Endothelial cell of umbilical vein (primary cell): ENCODE measurements at regions of chr17 and their contacts with region 1.

Region 1: DNA sequence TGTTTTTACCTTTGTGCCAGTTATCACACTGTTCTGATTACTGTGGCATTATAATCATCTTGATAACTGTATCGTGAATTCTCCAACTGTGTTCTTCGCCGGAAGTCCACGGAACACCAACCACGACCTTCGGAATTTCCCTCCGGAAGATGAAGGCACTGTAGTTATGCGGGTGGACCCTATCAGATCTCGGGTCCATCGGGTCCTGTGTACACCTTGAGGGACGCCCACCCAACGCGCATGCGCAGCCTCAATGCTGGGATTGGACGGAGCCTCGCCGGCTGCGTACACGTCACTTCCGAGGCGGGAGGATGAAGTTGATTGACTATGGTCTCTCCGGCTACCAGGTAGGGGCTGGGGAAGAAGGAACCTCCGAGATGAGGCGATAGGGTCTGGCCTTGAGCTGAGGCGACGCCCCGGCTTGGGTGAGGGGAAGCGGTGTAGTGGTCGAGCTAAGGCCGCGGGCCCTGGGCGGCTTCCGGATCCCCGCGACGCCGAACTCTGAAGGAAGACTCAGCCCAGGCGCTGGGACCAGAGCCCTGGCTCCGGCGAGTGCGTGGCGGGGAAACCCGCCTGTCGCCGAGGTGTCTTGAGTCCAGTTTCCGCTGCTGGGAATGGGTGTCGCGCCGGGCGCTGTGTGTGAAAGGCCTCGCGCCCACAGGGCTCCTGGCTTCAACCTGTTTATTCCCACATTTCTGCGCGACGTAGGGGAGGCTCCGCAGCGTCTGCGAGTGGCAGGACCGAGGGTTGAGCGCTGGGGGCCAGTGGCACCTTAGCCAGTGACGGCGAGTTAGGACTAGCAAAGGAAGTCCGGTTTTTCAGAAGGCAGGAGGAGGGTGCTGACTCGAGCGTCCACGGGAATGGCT is at the start of gene DHRS7B:
- DNase-seq: peak; percentile 93
- H3K4me3 ChIP-seq: peak within 1 kb of the TSS; percentile 47 to 84 (median 67)
- H3K27ac ChIP-seq: peak within 1 kb of the TSS; percentile 73
- H3K4me1 ChIP-seq: peaks cover 20% of the 10 kb centered on the region
- H3K27me3 ChIP-seq: peaks cover 0 to 2% of the 10 kb centered on the region in 2 experiments
- CTCF ChIP-seq: no peak
- POLR2A ChIP-seq: no peak
- total RNA-seq, gene DHRS7B: 12.7 and 14.0 TPM in 2 replicates

Region 2: GRCh38 chr17:20916383-20916782 is 210.5 kb before region 1 on chr17:
- CTCF ChIA-PET with region 1: no interaction called
- POLR2A ChIA-PET with region 1: no interaction called
- dilution Hi-C with region 1: no loop called
- intact Hi-C with region 1: no loop called
- DNase-seq: no peak
- H3K4me3 ChIP-seq: no peak overlapping the region
- H3K27ac ChIP-seq: no peak overlapping the region
- H3K4me1 ChIP-seq: no peaks in the 10 kb centered on the region
- H3K27me3 ChIP-seq: no peaks in the 10 kb centered on the region
- CTCF ChIP-seq: no peak
- POLR2A ChIP-seq: no peak

Region 3: GRCh38 chr17:21186399-21187187 is 59.7 kb after region 1 on chr17:
- CTCF ChIA-PET with region 1: interaction called, 9 read pairs
- POLR2A ChIA-PET with region 1: no interaction called
- dilution Hi-C with region 1: no loop called
- intact Hi-C with region 1: loop called (anchors 2 kb)
- DNase-seq: peak; percentile 78
- H3K4me3 ChIP-seq: peak overlapping the region in 1 of 3 experiments; percentile 4
- H3K27ac ChIP-seq: peak overlapping the region; percentile 68
- H3K4me1 ChIP-seq: peaks cover 16% of the 10 kb centered on the region
- H3K27me3 ChIP-seq: no peaks in the 10 kb centered on the region
- CTCF ChIP-seq: no peak
- POLR2A ChIP-seq: peak; percentile 14

Region 4: DNA sequence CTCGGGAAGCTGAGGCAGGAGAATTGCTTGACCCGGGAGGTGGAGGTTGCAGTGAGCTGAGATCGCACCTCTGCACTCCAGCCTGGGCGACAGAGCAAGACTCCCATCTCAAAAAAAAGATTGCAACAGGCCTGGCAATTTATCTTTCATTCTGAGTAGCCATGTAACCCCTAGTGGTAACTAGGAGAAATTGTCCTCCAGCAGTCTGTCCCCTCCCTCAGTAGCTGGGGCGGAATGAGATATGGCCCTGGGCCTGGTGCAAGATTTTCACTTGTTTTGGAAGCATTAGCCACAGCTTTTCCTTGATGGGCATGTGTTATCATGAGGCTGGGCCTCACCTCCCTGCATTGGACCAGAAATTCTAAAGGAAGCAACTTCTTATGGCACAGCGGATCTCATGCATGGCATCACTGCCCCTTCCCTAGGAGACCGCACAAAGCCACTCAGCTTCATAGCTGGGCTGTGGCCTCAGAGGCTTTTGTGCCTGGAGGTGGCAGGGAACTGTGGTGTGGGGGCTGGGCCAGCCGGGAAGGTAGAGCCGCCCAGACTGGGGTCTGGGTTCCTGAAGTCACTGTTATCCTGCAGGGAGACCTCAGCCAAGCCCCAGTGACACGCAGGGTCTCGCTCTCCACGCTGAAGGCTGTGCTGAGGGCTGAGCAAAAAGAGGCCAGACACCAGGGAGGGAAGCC is 112.9 kb after region 1 on chr17:
- CTCF ChIA-PET with region 1: interaction called, 20 read pairs
- POLR2A ChIA-PET with region 1: no interaction called
- dilution Hi-C with region 1: no loop called
- intact Hi-C with region 1: loop called (anchors 1 kb)
- DNase-seq: no peak
- H3K4me3 ChIP-seq: no peak overlapping the region
- H3K27ac ChIP-seq: no peak overlapping the region
- H3K4me1 ChIP-seq: no peaks in the 10 kb centered on the region
- H3K27me3 ChIP-seq: peaks cover 0 to 3% of the 10 kb centered on the region in 2 experiments
- CTCF ChIP-seq: peak; percentile 21 to 52
- POLR2A ChIP-seq: no peak

Region 5: DNA sequence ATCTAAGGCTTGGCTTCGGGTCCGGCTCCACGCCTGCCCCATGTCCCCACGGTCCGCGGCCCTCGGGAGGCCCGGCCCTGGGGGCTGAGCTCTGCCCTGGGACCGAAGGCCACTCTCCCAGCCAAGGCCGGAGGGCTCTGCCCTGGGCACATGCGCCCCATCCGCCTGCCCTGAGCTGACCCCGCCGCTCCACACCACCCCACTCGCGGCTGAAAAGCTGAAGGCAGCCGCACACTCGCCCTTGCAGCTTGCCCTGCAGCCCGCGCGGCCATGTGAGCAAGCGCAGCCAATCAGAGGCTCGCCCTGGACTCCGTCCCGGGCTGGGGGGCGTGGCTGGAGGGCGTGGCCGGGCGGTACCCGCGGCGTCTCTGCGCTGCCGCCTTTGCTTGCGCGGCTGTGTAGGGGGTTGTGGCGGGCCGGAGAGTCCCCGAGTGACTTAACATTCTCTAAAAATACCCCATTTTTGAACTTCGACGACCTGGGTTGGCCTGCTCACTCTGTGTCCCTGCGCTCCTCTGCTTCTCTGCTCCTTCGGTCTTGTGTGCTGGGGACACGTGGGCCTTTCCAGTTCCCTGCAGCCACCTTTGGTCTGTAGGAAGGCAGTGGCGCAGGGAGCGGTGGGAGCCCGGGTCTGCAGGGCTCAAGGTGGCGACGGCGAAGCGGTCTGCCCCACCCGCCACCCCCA is 148.8 kb after region 1 on chr17:
- CTCF ChIA-PET with region 1: interaction called, 71 read pairs
- POLR2A ChIA-PET with region 1: interaction called, 4 read pairs
- dilution Hi-C with region 1: no loop called
- intact Hi-C with region 1: no loop called
- DNase-seq: peak; percentile 81
- H3K4me3 ChIP-seq: peak overlapping the region; percentile 5 to 56 (median 39)
- H3K27ac ChIP-seq: no peak overlapping the region
- H3K4me1 ChIP-seq: peaks cover 11% of the 10 kb centered on the region
- H3K27me3 ChIP-seq: no peaks in the 10 kb centered on the region
- CTCF ChIP-seq: no peak
- POLR2A ChIP-seq: peak; percentile 76

Region 6: GRCh38 chr17:21318439-21318838 is 191.6 kb after region 1 on chr17:
- CTCF ChIA-PET with region 1: no interaction called
- POLR2A ChIA-PET with region 1: no interaction called
- dilution Hi-C with region 1: no loop called
- intact Hi-C with region 1: loop called (anchors 5 kb)
- DNase-seq: no peak
- H3K4me3 ChIP-seq: no peak overlapping the region
- H3K27ac ChIP-seq: no peak overlapping the region
- H3K4me1 ChIP-seq: no peaks in the 10 kb centered on the region
- H3K27me3 ChIP-seq: peaks cover 0 to under 1% of the 10 kb centered on the region in 2 experiments
- CTCF ChIP-seq: no peak
- POLR2A ChIP-seq: no peak